HEK293T (cell line): ENCODE measurements at regions of chr14 and their contacts with region 1.

Region 1: GRCh38 chr14:35404449-35405303 is at the start of gene NFKBIA:
- DNase-seq: peak; percentile 81

Region 2: DNA sequence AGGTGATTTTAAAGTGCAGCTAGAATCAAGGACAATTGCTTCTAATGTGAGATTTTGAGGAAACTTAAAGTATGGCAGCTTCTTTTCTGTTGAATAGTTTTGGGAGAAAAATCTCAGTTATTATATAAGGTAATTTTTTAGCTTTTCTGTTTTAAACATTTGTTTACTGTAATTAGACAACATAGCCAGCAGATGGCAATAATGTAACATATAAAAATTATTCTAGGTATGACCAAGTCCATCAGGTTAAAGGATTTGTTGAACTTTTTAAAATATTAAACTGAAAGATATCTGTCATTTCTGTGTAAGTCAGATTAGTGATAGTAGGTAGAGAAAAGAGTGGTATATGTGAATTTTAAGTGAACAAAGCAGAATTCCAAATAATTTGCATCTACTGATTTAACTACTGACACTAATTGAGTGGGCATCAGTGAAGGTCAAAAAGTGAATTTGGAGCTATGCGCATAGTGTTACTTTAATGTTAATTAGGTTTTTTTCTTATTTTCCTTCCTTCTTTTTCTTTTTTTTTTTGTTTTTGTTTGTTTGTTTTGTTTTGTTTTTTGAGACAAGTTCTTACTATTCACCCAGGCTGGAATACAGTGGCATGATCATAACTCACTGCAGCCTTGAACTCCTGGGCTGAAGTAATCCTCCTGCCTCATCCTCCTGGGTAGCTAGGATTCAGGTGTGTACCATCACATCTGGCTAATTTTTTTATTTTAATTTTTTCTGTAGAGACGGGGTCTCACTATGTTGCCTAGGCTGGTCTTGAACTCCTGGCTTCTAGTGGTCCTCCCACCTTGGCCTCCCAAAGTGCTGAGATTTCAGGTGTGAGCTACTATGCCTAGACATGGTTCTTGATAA is 263.7 kb before region 1 on chr14:
- CTCF ChIA-PET with region 1: interaction called, 15 read pairs
- POLR2A ChIA-PET with region 1: interaction called, 5 read pairs
- DNase-seq: no peak

Region 3: GRCh38 chr14:35292051-35292769 is 112.5 kb before region 1 on chr14 and contains the start of gene PSMA6:
- CTCF ChIA-PET with region 1: no interaction called
- POLR2A ChIA-PET with region 1: interaction called, 45 read pairs
- DNase-seq: peak; percentile 97

Region 4: GRCh38 chr14:35299708-35300107 is 105.0 kb before region 1 on chr14:
- CTCF ChIA-PET with region 1: interaction called, 10 read pairs
- POLR2A ChIA-PET with region 1: interaction called, 3 read pairs
- DNase-seq: no peak

Region 5: DNA sequence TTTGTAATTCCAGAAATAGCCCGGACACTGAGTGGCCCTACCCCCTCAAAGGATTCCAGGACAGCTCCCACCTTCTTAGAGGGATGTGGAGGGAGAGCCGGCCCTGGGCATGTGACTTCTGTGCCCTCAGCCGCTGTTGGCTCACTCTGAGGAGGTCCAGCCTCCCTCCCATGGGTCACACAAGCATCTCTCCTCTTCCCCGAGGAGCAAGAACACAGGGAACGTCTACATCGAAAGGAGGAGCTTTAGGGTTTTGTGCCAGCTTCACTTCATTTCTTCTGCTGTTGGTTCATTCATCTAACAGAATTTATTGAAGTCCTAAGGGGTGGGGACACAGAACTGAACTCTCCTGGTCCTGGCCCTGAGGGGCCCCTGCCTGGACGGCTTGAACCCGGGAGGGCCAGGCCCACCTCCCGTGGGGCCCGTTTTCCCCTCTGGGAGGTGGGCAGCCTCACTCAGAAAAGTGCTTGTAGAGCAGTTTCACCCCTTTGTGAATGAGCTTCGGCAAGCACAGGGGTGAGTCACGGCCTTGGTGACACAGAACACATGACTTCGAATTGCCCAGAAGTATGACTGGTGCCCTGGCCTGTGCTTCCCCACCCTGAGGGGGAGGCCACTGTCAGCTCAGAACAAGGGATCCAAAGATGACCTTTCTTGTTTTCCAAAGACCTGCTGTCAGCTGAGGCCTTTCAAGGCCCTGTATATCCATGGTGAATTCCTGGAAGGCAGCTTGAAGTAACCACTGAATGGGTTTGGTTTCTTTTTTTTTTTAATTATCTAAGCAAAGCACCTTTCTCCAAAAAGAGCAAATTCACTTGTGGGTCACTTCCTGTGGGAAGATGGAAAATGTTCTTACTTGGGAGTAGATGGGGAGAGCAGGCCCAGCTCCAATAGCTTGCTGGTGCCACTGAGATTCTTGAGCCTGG is 39.3 kb before region 1 on chr14:
- CTCF ChIA-PET with region 1: interaction called, 3 read pairs
- POLR2A ChIA-PET with region 1: interaction called, 19 read pairs
- DNase-seq: no peak